ENCODE measurements at regions of chr11 and their contacts with region 1.

Region 1: GRCh38 chr11:121318848-121319834 is 26.6 kb downstream of the SC5D start:
- DNase-seq: no peak
- ATAC-seq: peak in 3 of 4 donors; percentile 52 to 63 (median 63)
- H3K4me3 ChIP-seq: no peak overlapping the region
- H3K27ac ChIP-seq: no peak overlapping the region
- H3K4me1 ChIP-seq: no peaks in the 10 kb centered on the region
- H3K27me3 ChIP-seq: peaks cover 0 to 14% (median 3%) of the 10 kb centered on the region in 3 donors
- CTCF ChIP-seq: peak; percentile 60

Region 2: DNA sequence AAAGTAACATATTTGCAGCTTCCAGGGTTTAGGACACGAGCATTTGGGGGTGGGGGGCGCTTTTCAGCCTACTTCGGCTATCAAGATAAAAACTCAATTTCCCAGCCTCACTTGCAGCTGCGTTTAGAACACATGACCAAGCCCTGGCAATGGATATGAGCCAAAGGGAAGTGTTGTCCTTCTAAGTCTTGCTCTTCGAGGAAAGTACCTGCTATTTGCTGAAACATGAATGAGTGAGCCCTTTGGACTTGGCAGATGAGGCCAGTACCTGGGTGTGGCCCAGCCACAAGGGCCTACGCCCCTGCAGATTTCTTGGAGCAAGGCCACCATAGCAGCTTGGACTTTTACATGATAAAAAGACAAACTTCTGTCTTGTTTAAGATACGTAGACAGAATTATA is 72.8 kb after region 1 on chr11:
- intact Hi-C with region 1: no loop called
- DNase-seq: no peak
- ATAC-seq: no peak
- H3K4me3 ChIP-seq: no peak overlapping the region
- H3K27ac ChIP-seq: no peak overlapping the region
- H3K4me1 ChIP-seq: no peaks in the 10 kb centered on the region
- H3K27me3 ChIP-seq: no peaks in the 10 kb centered on the region
- CTCF ChIP-seq: no peak

Region 3: DNA sequence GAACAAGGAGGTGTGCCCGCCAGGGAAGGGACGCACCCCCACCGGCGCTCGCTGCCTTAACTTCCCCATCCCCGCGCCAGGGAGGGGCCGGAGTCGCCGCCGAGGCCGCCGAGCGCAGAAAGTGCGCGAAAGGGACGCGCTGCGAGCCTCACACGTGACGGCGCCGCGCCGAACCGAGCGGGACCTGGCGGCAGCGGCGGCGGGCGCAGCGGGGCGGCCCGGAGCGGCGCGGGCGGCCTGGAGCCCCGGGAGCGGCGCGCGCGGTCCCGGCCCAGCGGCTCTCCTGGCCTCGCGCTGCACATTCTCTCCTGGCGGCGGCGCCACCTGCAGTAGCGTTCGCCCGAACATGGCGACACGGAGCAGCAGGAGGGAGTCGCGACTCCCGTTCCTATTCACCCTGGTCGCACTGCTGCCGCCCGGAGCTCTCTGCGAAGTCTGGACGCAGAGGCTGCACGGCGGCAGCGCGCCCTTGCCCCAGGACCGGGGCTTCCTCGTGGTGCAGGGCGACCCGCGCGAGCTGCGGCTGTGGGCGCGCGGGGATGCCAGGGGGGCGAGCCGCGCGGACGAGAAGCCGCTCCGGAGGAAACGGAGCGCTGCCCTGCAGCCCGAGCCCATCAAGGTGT is 133.0 kb after region 1 on chr11 and contains the start of gene SORL1:
- intact Hi-C with region 1: loop called in 1 of 2 experiments (anchors 10 kb)
- DNase-seq: peak; percentile 62 to 78
- ATAC-seq: peak; percentile 74 to 96 (median 88)
- H3K4me3 ChIP-seq: peak within 1 kb of the TSS; percentile 65
- H3K27ac ChIP-seq: no peak within 1 kb of the TSS
- H3K4me1 ChIP-seq: no peaks in the 10 kb centered on the region
- H3K27me3 ChIP-seq: peaks cover 0 to 17% (median 2%) of the 10 kb centered on the region in 3 donors
- CTCF ChIP-seq: peak; percentile 45
- total RNA-seq, gene SORL1: 1.5 to 3.3 (median 2.5) TPM

Region 4: DNA sequence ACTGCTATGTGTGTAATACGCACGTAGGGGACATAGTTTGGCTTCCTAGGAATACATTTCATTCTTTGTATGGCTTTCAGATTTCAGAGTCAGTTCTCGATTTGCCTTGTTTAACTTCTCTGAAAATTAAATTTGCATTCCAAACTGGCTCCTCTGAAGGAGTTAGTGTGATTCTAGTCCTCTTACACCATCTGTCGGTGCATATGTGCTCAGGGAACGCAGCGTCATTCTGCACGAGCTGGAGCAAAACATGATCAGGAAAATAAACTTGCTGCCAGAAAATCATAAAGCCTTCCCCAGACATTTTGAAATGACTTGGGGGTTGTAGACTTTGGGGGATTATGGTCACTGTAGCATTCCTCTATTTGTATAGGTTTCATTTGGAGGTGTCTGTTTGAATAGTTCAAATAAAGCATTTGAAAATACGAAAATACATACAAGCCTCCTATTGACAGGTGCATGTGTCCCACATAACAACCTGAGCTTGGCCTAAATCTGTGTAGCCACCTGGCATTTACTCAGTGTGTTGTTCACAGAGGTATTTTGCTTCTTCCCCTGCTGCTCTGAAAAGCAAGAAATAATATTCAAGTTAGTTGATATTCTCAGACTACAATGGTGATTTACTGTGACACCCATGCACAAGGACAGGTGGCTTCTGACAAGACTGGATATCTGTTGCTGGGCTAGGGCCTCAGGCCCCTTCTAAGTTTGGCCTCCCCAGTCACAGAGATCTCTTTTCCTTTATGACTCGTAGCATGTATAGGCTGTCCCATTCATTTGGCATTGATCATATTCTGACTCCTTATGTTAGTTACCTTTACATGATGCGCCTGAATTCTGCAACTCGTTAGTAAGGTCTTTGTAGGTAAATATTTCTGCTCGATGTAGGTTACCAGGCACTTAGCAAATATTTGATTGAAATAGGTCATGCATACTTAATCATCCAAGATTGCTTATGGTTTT is 215.3 kb after region 1 on chr11:
- intact Hi-C with region 1: loop called in 1 of 2 experiments (anchors 5 kb)
- DNase-seq: no peak
- ATAC-seq: peak; percentile 57 to 81 (median 67)
- H3K4me3 ChIP-seq: no peak overlapping the region
- H3K27ac ChIP-seq: no peak overlapping the region
- H3K4me1 ChIP-seq: no peaks in the 10 kb centered on the region
- H3K27me3 ChIP-seq: no peaks in the 10 kb centered on the region
- CTCF ChIP-seq: peak; percentile 40

Region 5: DNA sequence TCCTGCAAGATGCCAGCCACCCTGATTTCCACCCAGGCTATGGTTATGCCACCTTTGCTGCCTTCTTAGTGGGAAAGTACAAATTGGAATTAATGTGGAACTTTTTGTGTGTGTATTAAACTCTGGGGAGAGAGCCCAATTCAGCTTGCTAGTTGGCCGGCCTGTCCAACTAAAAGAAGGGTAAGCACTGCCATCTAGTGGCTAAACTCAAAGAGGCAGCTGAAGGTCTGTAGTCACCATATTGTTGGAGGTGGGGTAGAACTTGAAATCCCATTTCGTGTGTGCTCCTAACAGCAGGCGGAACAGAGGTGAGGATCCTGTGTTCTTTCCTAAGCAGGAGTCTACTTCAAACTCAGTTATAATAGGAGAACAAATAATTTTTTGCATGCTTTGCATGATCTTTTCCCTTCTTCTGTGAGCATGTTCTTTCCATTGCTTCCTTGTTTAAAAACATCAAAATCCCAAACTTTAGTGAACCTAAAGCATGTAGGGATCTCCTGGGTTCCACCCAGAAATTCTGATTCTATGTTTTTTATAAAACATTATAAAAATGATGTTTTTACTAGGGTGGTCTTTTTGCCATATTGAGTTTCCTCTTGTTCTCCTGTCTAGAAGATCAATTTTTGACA is 272.4 kb after region 1 on chr11:
- intact Hi-C with region 1: loop called (anchors 1 to 2 kb)
- DNase-seq: no peak
- ATAC-seq: peak; percentile 69 to 88 (median 76)
- H3K4me3 ChIP-seq: no peak overlapping the region
- H3K27ac ChIP-seq: no peak overlapping the region
- H3K4me1 ChIP-seq: no peaks in the 10 kb centered on the region
- H3K27me3 ChIP-seq: no peaks in the 10 kb centered on the region
- CTCF ChIP-seq: peak; percentile 87